Astrocyte of the cerebellum (primary cell): ENCODE measurements at regions of chr10 and their contacts with region 1.

Region 1: DNA sequence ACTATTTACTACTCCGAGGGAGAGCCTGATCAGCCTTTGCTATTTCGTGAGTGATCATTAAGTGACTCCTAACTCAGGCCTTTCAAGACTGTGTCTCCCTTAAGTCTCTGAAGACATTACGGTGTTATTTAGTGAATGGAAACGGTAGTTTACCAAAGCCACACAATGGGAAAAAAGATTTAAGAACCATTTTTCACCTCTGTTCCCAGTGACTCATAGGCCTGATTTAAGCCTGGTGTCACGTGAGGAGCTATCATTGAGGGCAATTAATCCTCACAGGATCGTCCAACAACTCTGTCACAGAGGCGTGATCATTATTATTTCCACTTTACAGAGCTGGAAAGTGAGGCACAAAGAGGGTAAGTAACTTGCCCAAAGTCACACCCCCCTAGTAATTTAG is 20.3 kb downstream of the C10orf90 start:
- DNase-seq: no peak
- H3K4me3 ChIP-seq: no peak overlapping the region
- CTCF ChIP-seq: no peak

Region 2: DNA sequence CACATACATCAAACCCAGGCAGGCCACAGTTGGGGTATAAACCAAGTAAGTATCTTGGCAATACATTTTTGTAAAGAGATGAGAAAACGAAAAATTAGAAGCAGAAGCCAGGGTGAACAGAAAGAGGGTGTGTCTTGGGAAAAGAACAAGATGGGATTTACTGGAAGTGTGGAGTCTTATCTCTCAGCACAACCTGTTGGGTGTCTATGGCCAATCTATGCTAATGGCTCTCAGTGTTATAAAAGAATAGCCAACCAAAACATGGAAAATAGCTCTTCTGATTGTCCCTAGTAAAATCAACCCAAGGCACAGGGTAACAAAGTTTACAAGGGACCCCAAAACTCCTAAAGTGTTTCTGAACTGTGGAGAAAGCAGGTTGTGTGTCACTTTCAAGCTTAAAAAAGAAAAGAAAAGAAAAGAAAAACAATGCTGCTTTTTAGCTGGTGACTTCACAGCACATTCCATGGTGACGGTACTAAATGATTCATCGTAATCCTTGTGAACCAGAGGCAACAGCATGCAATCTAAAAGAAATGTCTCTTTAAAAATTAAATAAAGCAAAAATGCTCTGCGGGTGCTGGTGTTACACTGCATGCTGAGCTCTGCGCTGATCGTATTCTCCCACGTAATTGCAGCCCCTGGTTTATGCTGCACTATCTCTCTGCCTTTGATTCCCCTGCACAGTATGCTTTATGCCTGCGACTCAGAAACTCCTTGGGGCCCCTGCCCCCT is 80.5 kb before region 1 on chr10:
- in situ Hi-C with region 1: no loop called
- DNase-seq: peak; percentile 76
- H3K4me3 ChIP-seq: no peak overlapping the region
- CTCF ChIP-seq: no peak

Region 3: GRCh38 chr10:126588024-126588423 is 62.1 kb before region 1 on chr10:
- in situ Hi-C with region 1: no loop called
- DNase-seq: no peak
- H3K4me3 ChIP-seq: no peak overlapping the region
- CTCF ChIP-seq: no peak

Region 4: DNA sequence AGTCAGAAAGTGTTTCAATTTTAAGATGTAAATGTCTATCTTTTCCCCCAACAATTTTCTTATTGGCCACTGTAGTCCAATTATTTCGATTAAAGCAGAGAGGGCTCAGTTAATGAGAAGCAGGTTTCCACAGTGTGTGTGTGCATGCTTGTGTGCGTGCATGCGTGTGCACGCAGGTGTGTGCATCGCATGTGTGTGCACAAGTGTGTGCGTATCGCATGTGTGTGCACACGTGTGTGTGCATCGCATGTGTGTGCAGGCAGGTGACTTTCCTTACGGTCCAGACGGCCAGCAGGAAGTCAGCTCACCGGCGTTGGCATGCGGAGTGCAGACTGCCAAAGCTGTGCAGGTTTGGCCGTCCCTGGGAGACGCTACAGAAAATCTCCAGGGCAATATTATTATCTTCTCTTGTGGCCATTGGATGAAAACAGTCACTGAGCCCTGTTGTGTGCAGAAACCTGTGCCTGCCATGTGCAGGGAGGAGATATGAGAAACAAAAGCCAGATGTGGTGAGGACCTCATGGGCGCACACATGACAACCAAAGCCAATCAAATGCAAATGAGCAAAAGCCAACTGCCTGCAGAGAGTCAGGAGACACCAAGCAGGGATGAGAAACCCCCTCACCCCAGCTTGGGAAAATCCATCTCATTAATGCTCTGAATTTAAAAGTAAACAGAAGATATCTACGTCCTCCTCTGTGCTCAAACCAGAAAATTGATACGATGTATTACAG is 50.0 kb before region 1 on chr10:
- in situ Hi-C with region 1: loop called (anchors 5 kb)
- DNase-seq: no peak
- H3K4me3 ChIP-seq: no peak overlapping the region
- CTCF ChIP-seq: no peak

Region 5: DNA sequence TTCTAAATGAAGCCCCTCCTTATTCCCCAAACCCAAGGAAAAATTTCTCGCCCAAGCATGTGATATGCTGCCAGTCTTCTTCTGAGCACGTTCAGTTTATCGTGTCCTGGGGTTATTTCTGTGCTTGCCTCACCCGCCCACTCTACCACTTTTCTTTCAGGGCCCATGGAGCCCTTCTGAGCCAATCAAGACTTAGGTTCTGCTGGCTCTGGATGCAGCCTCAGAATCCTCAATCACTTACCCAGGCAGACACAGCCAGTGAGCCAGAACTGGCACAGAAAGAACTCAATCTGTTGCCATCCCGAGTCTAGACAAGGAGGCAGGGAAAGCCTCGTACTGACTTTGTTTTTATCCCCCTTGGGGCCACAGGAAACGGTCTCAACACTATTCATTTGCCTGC is 54.5 kb after region 1 on chr10:
- in situ Hi-C with region 1: no loop called
- DNase-seq: no peak
- H3K4me3 ChIP-seq: no peak overlapping the region
- CTCF ChIP-seq: no peak